Mammary epithelial cell (primary cell): ENCODE measurements at regions of chr4 and their contacts with region 1.

Region 1: DNA sequence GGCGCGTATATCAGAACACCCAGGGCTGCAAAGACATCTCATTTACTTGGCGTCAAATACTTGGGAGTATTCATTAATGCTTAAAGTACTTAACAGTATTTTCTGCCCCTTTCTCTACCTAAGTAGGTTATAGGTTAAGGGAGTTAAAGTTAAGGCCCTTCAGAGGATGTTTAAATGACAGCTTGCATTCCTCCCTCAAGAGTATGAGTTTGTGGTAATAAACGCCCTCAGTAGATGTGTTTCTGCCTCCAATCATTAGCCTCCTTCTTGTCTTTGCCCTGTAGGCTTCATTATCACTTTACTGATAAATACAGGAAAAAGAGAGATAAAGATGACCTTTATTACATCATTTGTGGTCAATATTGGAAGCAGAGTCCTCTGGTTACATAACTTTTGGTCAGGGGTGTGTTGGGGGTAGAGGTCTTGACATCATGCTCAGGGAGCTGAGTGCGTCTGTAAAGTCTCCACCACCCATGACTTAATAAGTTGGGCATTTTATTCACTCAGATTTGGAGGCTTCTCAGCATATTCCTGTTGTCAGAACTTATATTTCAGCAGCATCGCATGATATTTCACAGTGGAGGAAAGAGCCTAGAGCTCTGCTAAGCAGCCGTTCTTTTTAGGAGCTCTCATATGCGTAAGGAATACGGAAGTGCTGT is 145.9 kb downstream of the CPE start:
- DNase-seq: no peak
- H3K4me3 ChIP-seq: no peak overlapping the region
- H3K27ac ChIP-seq: no peak overlapping the region
- H3K4me1 ChIP-seq: peaks cover 3% of the 10 kb centered on the region
- H3K27me3 ChIP-seq: no peaks in the 10 kb centered on the region
- CTCF ChIP-seq: no peak

Region 2: GRCh38 chr4:165476214-165477098 is 48.2 kb before region 1 on chr4:
- CTCF ChIA-PET with region 1: interaction called, 18 read pairs
- dilution Hi-C with region 1: no loop called
- in situ Hi-C with region 1: no loop called
- intact Hi-C with region 1: no loop called
- DNase-seq: peak; percentile 94
- H3K4me3 ChIP-seq: no peak overlapping the region
- H3K27ac ChIP-seq: no peak overlapping the region
- H3K4me1 ChIP-seq: peaks cover 14% of the 10 kb centered on the region
- H3K27me3 ChIP-seq: no peaks in the 10 kb centered on the region
- CTCF ChIP-seq: no peak